H1 (cell line): ENCODE measurements at regions of chr22 and their contacts with region 1.

Region 1: DNA sequence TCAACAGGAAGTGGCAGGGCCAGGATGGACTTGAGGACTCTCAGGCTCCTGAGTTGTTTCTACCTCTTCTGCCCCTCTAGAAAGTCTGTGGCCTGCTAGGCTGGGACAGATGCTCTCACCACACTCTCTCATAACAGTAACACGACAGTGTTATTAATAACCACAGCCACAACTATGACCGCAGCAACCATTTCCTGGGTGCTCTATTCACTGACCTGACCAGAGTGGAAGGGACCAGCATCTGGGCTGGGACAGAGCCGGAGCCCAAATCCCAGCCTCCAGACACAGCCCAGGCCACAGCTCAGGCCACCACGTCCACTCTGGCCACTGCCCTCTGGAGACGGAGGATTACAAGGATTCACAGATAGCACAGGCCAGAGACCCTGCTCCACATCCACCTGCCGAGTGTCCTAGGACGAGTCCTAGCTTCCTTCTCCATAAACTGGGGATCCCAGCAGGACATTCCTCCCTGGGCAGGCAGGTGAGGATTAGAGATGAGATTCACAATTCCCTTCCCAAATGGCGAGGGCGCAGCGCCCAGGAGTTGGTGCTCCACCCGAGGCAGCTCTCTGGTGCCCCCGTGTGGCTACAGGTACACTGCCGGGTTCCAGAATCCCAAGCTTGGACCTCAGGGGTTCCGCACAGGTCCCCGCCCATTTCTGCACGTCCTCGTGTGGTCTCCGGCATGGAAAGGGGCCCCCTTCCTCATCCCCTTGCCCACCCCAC is 7.0 kb downstream of the PNPLA5 start:
- DNase-seq: peak in 1 of 2 experiments; percentile 96
- H3K4me3 ChIP-seq: no peak overlapping the region
- H3K27ac ChIP-seq: no peak overlapping the region
- H3K4me1 ChIP-seq: 0 out of 7 replicates have a peak, but pooled peaks cover 0 to 3% (median 1%) of the 10 kb centered on the region in 4 experiments
- H3K27me3 ChIP-seq: no peaks in the 10 kb centered on the region
- CTCF ChIP-seq: peak; percentile 91 to 95 (median 94)
- EP300 ChIP-seq: no peak
- POLR2A ChIP-seq: no peak
- RAD21 ChIP-seq: peak; percentile 78 to 86

Region 2: GRCh38 chr22:43624144-43624998 is 260.4 kb before region 1 on chr22:
- CTCF ChIA-PET with region 1: no interaction called
- POLR2A ChIA-PET with region 1: no interaction called
- DNase-seq: no peak
- H3K4me3 ChIP-seq: no peak overlapping the region
- H3K27ac ChIP-seq: no peak overlapping the region
- H3K4me1 ChIP-seq: peaks cover 0 to 7% (median 2%) of the 10 kb centered on the region in 4 experiments; a peak in 2 of 7 replicates
- H3K27me3 ChIP-seq: no peaks in the 10 kb centered on the region
- CTCF ChIP-seq: peak in 2 of 3 experiments; percentile 15; a peak in 2 of 4 replicates
- EP300 ChIP-seq: no peak
- POLR2A ChIP-seq: no peak
- RAD21 ChIP-seq: peak; percentile 39 to 53

Region 3: GRCh38 chr22:43826142-43827002 is 58.4 kb before region 1 on chr22:
- CTCF ChIA-PET with region 1: interaction called, 28 read pairs
- POLR2A ChIA-PET with region 1: interaction called, 3 read pairs
- DNase-seq: peak in 1 of 2 experiments; percentile 43
- H3K4me3 ChIP-seq: no peak overlapping the region
- H3K27ac ChIP-seq: no peak overlapping the region
- H3K4me1 ChIP-seq: peaks cover 2 to 26% (median 15%) of the 10 kb centered on the region in 4 experiments
- H3K27me3 ChIP-seq: no peaks in the 10 kb centered on the region
- CTCF ChIP-seq: peak in 1 of 3 experiments; percentile 2; a peak in 1 of 4 replicates
- EP300 ChIP-seq: no peak
- POLR2A ChIP-seq: no peak
- RAD21 ChIP-seq: peak; percentile 14 to 40; a peak in 2 of 4 replicates

Region 4: GRCh38 chr22:43848366-43849171 is 36.2 kb before region 1 on chr22:
- CTCF ChIA-PET with region 1: interaction called, 24 read pairs
- POLR2A ChIA-PET with region 1: no interaction called
- DNase-seq: no peak
- H3K4me3 ChIP-seq: no peak overlapping the region
- H3K27ac ChIP-seq: peak overlapping the region; percentile 39; the same call in 1 of the 2 replicates
- H3K4me1 ChIP-seq: peaks cover 0 to 16% (median 2%) of the 10 kb centered on the region in 4 experiments; a peak in 5 of 7 replicates
- H3K27me3 ChIP-seq: no peaks in the 10 kb centered on the region
- CTCF ChIP-seq: peak; percentile 56 to 76 (median 67)
- EP300 ChIP-seq: no peak
- POLR2A ChIP-seq: no peak
- RAD21 ChIP-seq: peak; percentile 26 to 44

Region 5: GRCh38 chr22:43854786-43855271 is 29.9 kb before region 1 on chr22:
- CTCF ChIA-PET with region 1: interaction called, 24 read pairs
- POLR2A ChIA-PET with region 1: no interaction called
- DNase-seq: no peak
- H3K4me3 ChIP-seq: no peak overlapping the region
- H3K27ac ChIP-seq: no peak overlapping the region
- H3K4me1 ChIP-seq: peaks cover 0 to 10% (median 5%) of the 10 kb centered on the region in 4 experiments
- H3K27me3 ChIP-seq: no peaks in the 10 kb centered on the region
- CTCF ChIP-seq: no peak
- EP300 ChIP-seq: no peak
- POLR2A ChIP-seq: no peak
- RAD21 ChIP-seq: no peak

Region 6: GRCh38 chr22:43867839-43868652 is 16.7 kb before region 1 on chr22:
- CTCF ChIA-PET with region 1: interaction called, 24 read pairs
- POLR2A ChIA-PET with region 1: interaction called, 10 read pairs
- DNase-seq: peak; percentile 71 to 93
- H3K4me3 ChIP-seq: peak overlapping the region in 2 of 4 experiments; percentile 5 to 46; a peak in 3 of 8 replicates
- H3K27ac ChIP-seq: no peak overlapping the region
- H3K4me1 ChIP-seq: peaks cover 0 to 5% (median 2%) of the 10 kb centered on the region in 4 experiments; a peak in 4 of 7 replicates
- H3K27me3 ChIP-seq: no peaks in the 10 kb centered on the region
- CTCF ChIP-seq: no peak
- EP300 ChIP-seq: no peak
- POLR2A ChIP-seq: no peak
- RAD21 ChIP-seq: no peak; a peak in 1 of 4 replicates

Region 7: DNA sequence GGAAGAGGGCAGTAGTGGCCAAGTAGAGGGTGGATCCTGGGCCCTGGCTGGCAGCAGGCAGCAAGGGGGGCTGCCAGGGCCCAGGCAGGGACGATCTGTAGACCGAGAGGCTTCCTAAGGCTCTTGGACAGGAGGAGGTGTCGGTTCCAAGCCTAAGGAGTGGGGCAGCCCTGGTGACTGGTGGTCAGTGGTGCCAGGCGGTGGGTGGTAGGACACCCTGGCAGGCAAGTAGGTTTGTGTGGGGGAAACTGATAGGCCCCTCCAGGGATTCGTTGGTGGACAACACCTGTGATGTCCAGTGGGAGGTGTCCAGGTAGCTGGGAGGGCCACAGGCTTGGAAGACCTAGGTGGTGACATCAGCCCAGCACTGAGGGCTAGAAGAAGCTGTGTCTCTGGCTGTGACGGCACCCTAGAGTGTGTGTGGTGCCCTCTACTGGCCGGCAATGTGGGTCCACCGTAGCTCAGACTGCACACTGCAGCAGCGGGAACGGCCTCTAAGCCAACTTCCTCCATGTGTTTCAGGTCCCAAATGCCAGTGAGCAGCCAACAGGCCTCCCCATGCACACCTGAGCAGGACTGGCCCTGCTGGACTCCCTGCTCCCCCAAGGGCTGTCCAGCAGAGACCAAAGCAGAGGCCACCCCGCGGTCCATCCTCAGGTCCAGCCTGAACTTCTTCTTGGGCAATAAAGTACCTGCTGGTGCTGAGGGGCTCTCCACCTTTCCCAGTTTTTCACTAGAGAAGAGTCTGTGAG is 61.0 kb after region 1 on chr22:
- CTCF ChIA-PET with region 1: interaction called, 32 read pairs
- POLR2A ChIA-PET with region 1: no interaction called
- DNase-seq: peak in 1 of 2 experiments; percentile 83
- H3K4me3 ChIP-seq: no peak overlapping the region
- H3K27ac ChIP-seq: no peak overlapping the region
- H3K4me1 ChIP-seq: no peaks in the 10 kb centered on the region
- H3K27me3 ChIP-seq: no peaks in the 10 kb centered on the region
- CTCF ChIP-seq: peak; percentile 82 to 97 (median 94)
- EP300 ChIP-seq: no peak
- POLR2A ChIP-seq: no peak
- RAD21 ChIP-seq: peak; percentile 42 to 62; a peak in 3 of 4 replicates